Natural killer cell (primary cell): ENCODE measurements at regions of chrX and their contacts with region 1.

Region 1: DNA sequence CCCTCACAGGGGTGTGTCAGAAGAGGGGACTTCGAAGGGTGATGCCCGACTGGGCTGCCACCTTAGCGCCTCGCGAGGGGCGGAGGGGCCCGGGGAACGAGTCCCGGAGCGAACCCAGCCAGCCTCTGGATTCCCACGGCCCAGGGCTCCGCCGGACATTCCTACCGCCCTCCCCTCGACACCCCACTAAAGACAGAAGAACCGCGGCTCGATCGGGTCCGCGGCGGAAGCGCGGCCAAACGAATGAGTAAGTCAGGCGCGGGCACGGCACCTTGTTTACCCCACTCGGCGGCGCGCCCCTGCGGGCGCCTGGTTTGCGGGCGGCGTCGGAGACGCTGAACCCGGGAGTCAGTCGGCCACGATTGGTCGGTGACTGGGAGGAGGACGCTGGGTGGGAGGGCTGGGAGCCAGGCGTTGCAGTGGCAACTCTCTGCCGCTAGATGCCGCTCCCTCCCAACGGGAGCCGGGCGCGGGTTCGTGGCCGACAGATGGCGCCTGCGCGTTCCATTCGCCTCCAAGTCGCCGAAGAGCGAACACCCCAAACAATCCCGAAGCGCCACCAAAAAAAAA is 1.4 kb upstream of the STAG2 start:
- DNase-seq: peak; percentile 83 to 95
- ATAC-seq: peak; percentile 65 to 89 (median 77)
- H3K4me3 ChIP-seq: peak overlapping the region; percentile 100
- H3K4me3 Mint-ChIP-seq: peak overlapping the region; percentile 99
- H3K27ac ChIP-seq: peak overlapping the region; percentile 100
- H3K27ac Mint-ChIP-seq: peak overlapping the region; percentile 99 to 100
- H3K4me1 ChIP-seq: peaks cover 3% of the 10 kb centered on the region
- H3K4me1 Mint-ChIP-seq: peaks cover 31 to 35% of the 10 kb centered on the region in 2 donors
- H3K27me3 ChIP-seq: no peaks in the 10 kb centered on the region
- H3K27me3 Mint-ChIP-seq: no peaks in the 10 kb centered on the region
- CTCF ChIP-seq: peak; percentile 74

Region 2: DNA sequence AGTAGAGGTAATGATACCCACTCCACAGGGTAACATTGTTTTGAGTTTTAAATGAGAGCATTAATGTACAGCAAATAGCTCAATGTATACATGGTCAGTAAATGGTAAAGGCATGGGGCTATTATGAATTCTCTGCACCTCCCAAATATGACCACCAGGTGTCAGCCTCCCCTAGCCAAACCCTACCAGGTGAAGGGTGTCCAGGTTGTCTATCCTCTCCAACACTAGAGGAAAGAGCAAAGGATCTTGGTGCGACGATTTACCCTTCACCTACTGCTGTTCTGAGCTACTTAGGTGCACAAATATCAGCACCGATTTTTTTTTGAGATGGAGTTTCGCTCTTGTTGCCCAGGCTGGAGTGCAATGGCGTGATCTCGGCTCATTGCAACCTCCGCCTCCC is 126.7 kb before region 1 on chrX:
- intact Hi-C with region 1: loop called (anchors 5 kb)
- DNase-seq: peak; percentile 33 to 77
- ATAC-seq: peak; percentile 83 to 95 (median 92)
- H3K4me3 ChIP-seq: no peak overlapping the region
- H3K4me3 Mint-ChIP-seq: no peak overlapping the region
- H3K27ac ChIP-seq: no peak overlapping the region
- H3K27ac Mint-ChIP-seq: no peak overlapping the region
- H3K4me1 ChIP-seq: no peaks in the 10 kb centered on the region
- H3K4me1 Mint-ChIP-seq: no peaks in the 10 kb centered on the region
- H3K27me3 ChIP-seq: no peaks in the 10 kb centered on the region
- H3K27me3 Mint-ChIP-seq: peaks cover 0 to 4% of the 10 kb centered on the region in 2 donors
- CTCF ChIP-seq: peak; percentile 70

Region 3: DNA sequence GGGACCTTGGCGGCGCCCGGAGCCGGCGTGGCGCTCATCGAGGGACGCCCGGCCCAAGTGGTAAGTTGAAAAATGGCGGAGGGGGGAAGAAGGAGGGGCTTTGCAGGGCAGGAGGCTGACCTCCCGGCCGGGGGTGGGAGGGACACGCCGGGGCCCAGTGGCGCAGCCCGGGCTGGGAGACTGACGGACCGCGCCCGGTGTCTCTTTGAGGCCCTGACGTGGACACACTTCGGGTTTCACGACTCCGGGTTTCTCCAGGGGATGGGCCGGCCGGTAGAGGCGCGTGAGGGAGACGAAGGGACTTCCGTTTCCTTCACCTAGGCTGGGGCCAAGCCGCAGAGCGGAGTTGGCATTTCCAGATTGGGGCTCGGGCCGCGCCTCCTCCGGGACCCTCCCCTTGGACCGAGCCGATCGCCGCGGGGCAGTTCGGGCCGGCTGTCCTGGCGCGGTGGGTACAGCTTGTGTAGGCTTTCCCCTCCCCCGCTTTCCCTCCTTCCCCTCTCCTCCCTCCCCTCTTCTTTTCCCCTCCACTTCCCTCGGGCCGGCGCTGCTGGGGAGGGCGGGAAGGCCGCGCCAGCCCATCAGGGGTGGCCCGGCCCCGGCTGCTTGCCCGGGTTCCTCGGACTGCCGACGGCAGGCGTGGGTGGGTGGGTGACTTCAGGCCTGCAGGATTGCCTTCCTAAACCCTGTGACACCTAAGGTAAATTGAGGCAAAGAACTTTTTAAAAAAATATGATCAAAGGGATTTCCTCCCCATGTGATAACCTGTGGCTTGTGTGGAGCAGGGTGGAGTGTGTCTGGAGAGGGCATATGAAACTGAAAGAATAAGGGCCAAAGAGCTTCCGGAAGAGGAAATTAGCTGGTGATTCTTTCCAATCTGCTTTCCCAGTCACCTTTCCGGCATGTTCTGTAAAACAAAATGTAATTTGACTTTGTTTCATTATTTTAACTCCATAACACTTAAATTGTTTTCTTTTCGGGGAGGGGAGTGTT is 100.0 kb before region 1 on chrX and contains the start of gene XIAP:
- intact Hi-C with region 1: loop called (anchors 1 kb)
- DNase-seq: peak; percentile 72 to 76
- ATAC-seq: peak; percentile 83 to 95 (median 89)
- H3K4me3 ChIP-seq: peak within 1 kb of the TSS; percentile 98
- H3K4me3 Mint-ChIP-seq: peak within 1 kb of the TSS; percentile 93
- H3K27ac ChIP-seq: peak within 1 kb of the TSS; percentile 99
- H3K27ac Mint-ChIP-seq: peak within 1 kb of the TSS; percentile 95
- H3K4me1 ChIP-seq: peaks cover 13% of the 10 kb centered on the region
- H3K4me1 Mint-ChIP-seq: peaks cover 23 to 25% of the 10 kb centered on the region in 2 donors
- H3K27me3 ChIP-seq: no peaks in the 10 kb centered on the region
- H3K27me3 Mint-ChIP-seq: no peaks in the 10 kb centered on the region
- CTCF ChIP-seq: no peak
- total RNA-seq, gene XIAP: 32.2 to 44.9 (median 40.2) TPM

Region 4: GRCh38 chrX:123878252-123878721 is 81.8 kb before region 1 on chrX:
- intact Hi-C with region 1: loop called (anchors 1 kb)
- DNase-seq: peak in 1 of 2 donors; percentile 45
- ATAC-seq: peak; percentile 56 to 74 (median 67)
- H3K4me3 ChIP-seq: no peak overlapping the region
- H3K4me3 Mint-ChIP-seq: peak overlapping the region; percentile 80
- H3K27ac ChIP-seq: peak overlapping the region; percentile 80
- H3K27ac Mint-ChIP-seq: peak overlapping the region; percentile 86 to 88
- H3K4me1 ChIP-seq: peaks cover 22% of the 10 kb centered on the region
- H3K4me1 Mint-ChIP-seq: peaks cover 11 to 20% of the 10 kb centered on the region in 2 donors
- H3K27me3 ChIP-seq: no peaks in the 10 kb centered on the region
- H3K27me3 Mint-ChIP-seq: no peaks in the 10 kb centered on the region
- CTCF ChIP-seq: no peak

Region 5: DNA sequence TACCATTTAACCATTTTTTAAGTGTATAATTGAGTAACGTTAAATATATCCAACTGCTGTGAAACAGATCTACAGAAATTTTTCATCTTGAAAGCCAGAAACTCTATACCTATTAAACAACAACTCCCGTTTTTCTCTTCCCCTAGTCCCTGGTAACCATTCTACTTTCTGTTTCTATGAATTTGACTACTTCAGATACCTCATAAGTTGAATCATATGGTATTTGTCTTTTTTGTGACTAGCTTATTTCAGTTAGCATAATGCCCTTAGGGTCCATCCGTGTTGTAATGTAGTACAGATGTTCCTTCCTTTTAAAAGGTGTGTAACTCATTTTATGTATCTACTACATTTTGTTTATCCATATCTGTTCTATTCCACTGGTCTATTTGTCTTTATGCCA is 50.0 kb after region 1 on chrX:
- intact Hi-C with region 1: loop called (anchors 5 kb)
- DNase-seq: no peak
- ATAC-seq: peak in 2 of 3 donors; percentile 24 to 39
- H3K4me3 ChIP-seq: no peak overlapping the region
- H3K4me3 Mint-ChIP-seq: peak overlapping the region; percentile 11
- H3K27ac ChIP-seq: no peak overlapping the region
- H3K27ac Mint-ChIP-seq: peak overlapping the region; percentile 35 to 53
- H3K4me1 ChIP-seq: no peaks in the 10 kb centered on the region
- H3K4me1 Mint-ChIP-seq: peaks cover 62 to 64% of the 10 kb centered on the region in 2 donors
- H3K27me3 ChIP-seq: no peaks in the 10 kb centered on the region
- H3K27me3 Mint-ChIP-seq: no peaks in the 10 kb centered on the region
- CTCF ChIP-seq: no peak

Region 6: DNA sequence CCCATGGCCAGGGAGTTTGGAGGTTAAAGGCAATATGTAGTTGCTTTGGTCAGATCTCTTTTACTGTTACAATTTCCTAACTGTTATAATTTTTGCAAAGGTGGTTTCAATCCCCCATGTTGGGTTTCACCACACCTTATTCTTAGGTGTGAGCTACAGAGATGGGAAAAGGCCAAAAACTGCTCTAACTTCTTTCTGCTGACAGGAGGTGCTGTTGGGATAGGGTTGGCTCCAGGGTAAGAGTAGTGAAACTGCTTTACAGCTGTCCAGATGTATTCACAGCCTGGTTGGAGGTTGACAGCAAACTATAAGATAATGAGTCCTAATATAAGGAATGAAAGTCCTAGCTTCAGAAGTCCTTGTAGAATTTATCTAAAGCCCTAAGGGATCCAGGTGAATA is 191.1 kb after region 1 on chrX:
- intact Hi-C with region 1: no loop called
- DNase-seq: no peak
- ATAC-seq: no peak
- H3K4me3 ChIP-seq: no peak overlapping the region
- H3K4me3 Mint-ChIP-seq: no peak overlapping the region
- H3K27ac ChIP-seq: no peak overlapping the region
- H3K27ac Mint-ChIP-seq: no peak overlapping the region
- H3K4me1 ChIP-seq: no peaks in the 10 kb centered on the region
- H3K4me1 Mint-ChIP-seq: no peaks in the 10 kb centered on the region
- H3K27me3 ChIP-seq: no peaks in the 10 kb centered on the region
- H3K27me3 Mint-ChIP-seq: no peaks in the 10 kb centered on the region
- CTCF ChIP-seq: no peak

Region 7: GRCh38 chrX:124338733-124339514 is 378.8 kb after region 1 on chrX:
- intact Hi-C with region 1: loop called (anchors 5 kb)
- DNase-seq: peak; percentile 33 to 79
- ATAC-seq: peak; percentile 63 to 85 (median 78)
- H3K4me3 ChIP-seq: no peak overlapping the region
- H3K4me3 Mint-ChIP-seq: peak overlapping the region; percentile 1
- H3K27ac ChIP-seq: peak overlapping the region; percentile 50
- H3K27ac Mint-ChIP-seq: peak overlapping the region; percentile 80
- H3K4me1 ChIP-seq: peaks cover 22% of the 10 kb centered on the region
- H3K4me1 Mint-ChIP-seq: peaks cover 43% of the 10 kb centered on the region in 2 donors
- H3K27me3 ChIP-seq: no peaks in the 10 kb centered on the region
- H3K27me3 Mint-ChIP-seq: peaks cover 0 to 8% of the 10 kb centered on the region in 2 donors
- CTCF ChIP-seq: no peak

Region 8: DNA sequence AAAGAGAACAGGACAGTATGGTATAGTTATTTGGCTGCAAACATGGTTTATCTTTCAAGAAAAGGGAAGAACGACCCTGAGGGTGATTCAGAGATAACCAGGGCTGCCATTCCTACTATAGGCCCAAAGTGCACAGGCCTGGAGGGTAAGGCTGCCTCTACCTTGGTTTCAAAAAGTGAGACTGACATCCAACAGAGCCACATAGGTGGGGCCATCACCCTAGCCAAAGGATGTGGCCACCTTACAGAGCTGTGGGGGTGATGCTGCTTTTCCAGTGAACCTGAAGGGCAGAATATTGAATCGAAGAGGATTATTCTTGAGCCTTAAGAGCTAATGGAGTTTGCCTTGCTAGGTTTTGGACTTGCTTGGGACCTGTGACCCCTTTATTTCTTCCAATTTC is 401.9 kb after region 1 on chrX:
- intact Hi-C with region 1: loop called (anchors 5 kb)
- DNase-seq: no peak
- ATAC-seq: peak in 2 of 3 donors; percentile 35 to 69
- H3K4me3 ChIP-seq: no peak overlapping the region
- H3K4me3 Mint-ChIP-seq: peak overlapping the region; percentile 70
- H3K27ac ChIP-seq: peak overlapping the region; percentile 28
- H3K27ac Mint-ChIP-seq: peak overlapping the region; percentile 86 to 88
- H3K4me1 ChIP-seq: peaks cover 17% of the 10 kb centered on the region
- H3K4me1 Mint-ChIP-seq: peaks cover 45 to 49% of the 10 kb centered on the region in 2 donors
- H3K27me3 ChIP-seq: no peaks in the 10 kb centered on the region
- H3K27me3 Mint-ChIP-seq: no peaks in the 10 kb centered on the region
- CTCF ChIP-seq: no peak